ENCODE measurements at regions of chr10 and their contacts with region 1.

Region 1: DNA sequence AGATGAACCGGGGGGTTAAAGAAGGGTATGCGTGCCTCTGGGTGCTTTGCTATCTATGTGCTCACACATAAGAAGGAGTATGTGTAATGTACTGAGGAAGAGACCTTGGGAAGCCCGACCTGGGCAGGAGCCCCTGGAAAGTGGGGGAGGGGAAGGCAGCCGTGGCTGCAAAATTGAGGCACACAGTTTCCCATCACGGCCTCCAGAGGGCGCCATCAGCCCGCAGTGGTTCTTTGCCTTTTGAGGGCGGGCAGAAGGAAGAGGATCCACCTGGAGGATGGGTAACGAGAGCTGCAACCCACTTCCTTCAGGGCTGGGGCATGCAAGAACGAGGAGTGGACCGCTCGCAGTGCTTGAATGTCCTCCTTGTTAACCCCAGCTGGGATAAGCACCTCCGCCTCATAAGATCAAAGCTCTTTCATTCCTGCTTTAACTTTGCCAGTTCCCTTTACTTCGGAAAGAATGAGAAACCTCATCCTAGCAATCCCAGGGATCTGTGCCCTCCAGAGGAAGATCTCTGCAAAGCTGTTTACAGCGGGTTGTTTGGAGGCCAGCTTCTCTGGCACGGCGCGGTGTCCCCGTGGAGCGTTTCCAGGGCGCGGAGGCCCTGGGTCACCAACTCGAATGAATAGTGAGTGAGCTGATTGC is 77.9 kb downstream of the PCGF5 start:
- DNase-seq: peak; percentile 80
- H3K4me3 Mint-ChIP-seq: peak overlapping the region; percentile 28
- H3K27ac Mint-ChIP-seq: no peak overlapping the region
- H3K4me1 Mint-ChIP-seq: no peaks in the 10 kb centered on the region
- H3K27me3 Mint-ChIP-seq: no peaks in the 10 kb centered on the region
- CTCF ChIP-seq: peak; percentile 96

Region 2: GRCh38 chr10:91287276-91287675 is 11.1 kb before region 1 on chr10:
- CTCF ChIA-PET with region 1: interaction called, 35 read pairs
- POLR2A ChIA-PET with region 1: no interaction called
- intact Hi-C with region 1: no loop called
- DNase-seq: peak; percentile 18
- H3K4me3 Mint-ChIP-seq: no peak overlapping the region
- H3K27ac Mint-ChIP-seq: no peak overlapping the region
- H3K4me1 Mint-ChIP-seq: no peaks in the 10 kb centered on the region
- H3K27me3 Mint-ChIP-seq: no peaks in the 10 kb centered on the region
- CTCF ChIP-seq: no peak

Region 3: GRCh38 chr10:91360400-91360799 is 62.1 kb after region 1 on chr10:
- CTCF ChIA-PET with region 1: interaction called, 15 read pairs
- POLR2A ChIA-PET with region 1: no interaction called
- intact Hi-C with region 1: no loop called
- DNase-seq: no peak
- H3K4me3 Mint-ChIP-seq: no peak overlapping the region
- H3K27ac Mint-ChIP-seq: no peak overlapping the region
- H3K4me1 Mint-ChIP-seq: no peaks in the 10 kb centered on the region
- H3K27me3 Mint-ChIP-seq: no peaks in the 10 kb centered on the region
- CTCF ChIP-seq: no peak

Region 4: DNA sequence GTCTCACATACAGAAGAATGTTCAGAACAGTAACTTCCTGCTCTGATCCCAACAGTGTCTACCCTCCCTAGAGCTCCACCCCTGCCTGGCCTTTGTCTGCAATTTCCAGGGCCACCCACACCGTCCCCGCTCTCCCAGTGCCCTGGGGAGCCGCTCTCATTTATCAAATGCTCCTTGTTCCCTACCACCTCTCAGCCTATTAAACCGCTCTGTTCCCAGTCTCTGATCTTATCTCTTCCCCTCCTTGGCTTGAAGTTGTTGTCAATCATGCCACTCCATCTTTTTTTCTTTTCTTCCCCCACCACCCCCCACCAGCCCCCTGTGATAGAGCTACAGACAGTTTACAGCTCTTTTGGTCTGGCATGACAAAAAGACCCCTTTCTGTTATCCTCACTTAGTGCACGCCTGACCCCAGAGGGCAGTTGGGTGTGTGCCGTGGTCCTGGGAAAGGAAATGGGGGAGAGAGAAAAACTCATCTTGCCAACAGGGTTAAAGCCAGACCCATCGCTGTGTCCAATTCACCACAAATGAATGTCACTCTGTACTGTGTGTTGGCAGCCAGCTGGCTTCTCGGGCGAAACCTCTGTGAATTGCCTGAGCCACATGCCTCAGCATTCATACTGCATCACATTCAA is 83.0 kb after region 1 on chr10:
- CTCF ChIA-PET with region 1: interaction called, 38 read pairs
- POLR2A ChIA-PET with region 1: no interaction called
- intact Hi-C with region 1: loop called (anchors 5 kb)
- DNase-seq: no peak
- H3K4me3 Mint-ChIP-seq: no peak overlapping the region
- H3K27ac Mint-ChIP-seq: no peak overlapping the region
- H3K4me1 Mint-ChIP-seq: no peaks in the 10 kb centered on the region
- H3K27me3 Mint-ChIP-seq: peaks cover 16% of the 10 kb centered on the region
- CTCF ChIP-seq: no peak

Region 5: DNA sequence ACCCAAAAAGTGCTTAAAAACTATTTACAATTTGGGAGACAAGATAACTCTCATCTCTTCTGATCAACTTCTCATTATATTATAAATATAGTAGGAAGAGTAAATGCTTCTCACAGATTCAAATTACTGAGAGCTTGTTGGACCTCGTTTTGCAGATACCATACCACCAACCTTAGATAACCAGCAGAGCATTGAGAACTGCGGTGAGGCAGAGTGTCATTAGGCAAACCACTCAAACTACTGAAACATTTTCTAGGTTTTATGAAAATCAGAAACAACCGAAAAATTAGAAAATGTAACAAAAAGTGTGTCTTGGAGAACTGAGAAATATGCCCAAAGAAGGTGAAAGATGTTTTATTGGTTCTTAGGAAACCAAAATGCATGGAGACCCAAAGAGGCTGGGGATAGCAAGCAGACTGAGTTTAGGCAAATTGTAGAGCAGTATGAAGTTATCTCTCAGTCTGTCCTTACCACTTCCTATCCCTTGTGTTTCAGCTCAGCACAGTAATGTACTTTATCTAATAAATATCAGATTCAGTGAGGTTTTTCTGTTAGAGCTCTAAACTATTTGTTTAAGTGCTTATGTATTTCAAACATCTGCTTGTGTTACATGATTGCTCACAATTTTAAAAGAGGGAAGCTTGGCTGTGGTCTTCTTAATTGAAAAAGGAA is 189.7 kb after region 1 on chr10:
- CTCF ChIA-PET with region 1: interaction called, 7 read pairs
- POLR2A ChIA-PET with region 1: no interaction called
- intact Hi-C with region 1: loop called (anchors 5 kb)
- DNase-seq: no peak
- H3K4me3 Mint-ChIP-seq: no peak overlapping the region
- H3K27ac Mint-ChIP-seq: no peak overlapping the region
- H3K4me1 Mint-ChIP-seq: no peaks in the 10 kb centered on the region
- H3K27me3 Mint-ChIP-seq: no peaks in the 10 kb centered on the region
- CTCF ChIP-seq: no peak

Region 6: DNA sequence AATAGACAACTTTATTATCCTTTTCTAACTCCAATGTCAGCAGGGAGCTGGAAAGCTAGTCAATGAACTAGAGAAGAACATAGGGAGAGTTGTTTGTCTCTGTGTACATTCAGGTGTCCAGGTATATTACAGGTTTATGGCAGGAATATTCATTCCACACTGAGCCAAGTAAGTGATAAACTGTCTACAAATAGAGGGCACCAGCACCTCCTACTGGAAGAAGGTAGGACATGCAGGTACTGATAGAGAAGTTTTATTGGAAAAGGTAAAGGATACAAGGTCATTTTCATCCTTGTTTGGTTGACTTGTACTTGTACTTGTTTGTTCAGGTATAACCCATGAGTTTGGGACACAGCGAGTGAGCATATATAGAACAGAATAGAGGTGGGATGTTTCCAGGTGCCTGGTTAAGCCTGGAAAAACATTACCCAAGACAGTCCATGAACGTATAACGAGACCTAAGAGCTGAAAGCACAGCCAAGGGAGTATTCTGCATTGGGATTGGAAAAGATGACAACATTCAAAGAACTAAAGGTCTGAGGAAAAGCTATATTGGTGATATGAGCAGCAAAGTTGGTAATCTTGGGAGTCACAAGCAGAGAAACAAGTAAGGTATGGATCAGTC is 395.9 kb after region 1 on chr10:
- CTCF ChIA-PET with region 1: interaction called, 6 read pairs
- POLR2A ChIA-PET with region 1: interaction called, 3 read pairs
- intact Hi-C with region 1: loop called (anchors 5 kb)
- DNase-seq: peak; percentile 83
- H3K4me3 Mint-ChIP-seq: no peak overlapping the region
- H3K27ac Mint-ChIP-seq: no peak overlapping the region
- H3K4me1 Mint-ChIP-seq: peaks cover 19% of the 10 kb centered on the region
- H3K27me3 Mint-ChIP-seq: peaks cover 25% of the 10 kb centered on the region
- CTCF ChIP-seq: peak; percentile 79